Activated CD4-positive, alpha-beta T cell treated with anti-CD3 and anti-CD28 coated beads for 36 hours (primary cell): ENCODE measurements at regions of chr9 and their contacts with region 1.

Region 1: GRCh38 chr9:129884220-129885017 is 49.2 kb downstream of the USP20 start:
- DNase-seq: peak; percentile 98
- ATAC-seq: peak; percentile 55
- H3K4me3 Mint-ChIP-seq: peak overlapping the region; percentile 97
- H3K27ac Mint-ChIP-seq: peak overlapping the region; percentile 99
- H3K4me1 Mint-ChIP-seq: peaks cover 41% of the 10 kb centered on the region
- H3K27me3 Mint-ChIP-seq: no peaks in the 10 kb centered on the region

Region 2: GRCh38 chr9:129487642-129488409 is 396.6 kb before region 1 on chr9:
- CTCF ChIA-PET with region 1: no interaction called
- POLR2A ChIA-PET with region 1: no interaction called
- intact Hi-C with region 1: loop called in 1 of 2 experiments (anchors 2 kb)
- DNase-seq: peak; percentile 76
- ATAC-seq: peak; percentile 34
- H3K4me3 Mint-ChIP-seq: peak overlapping the region; percentile 93
- H3K27ac Mint-ChIP-seq: peak overlapping the region; percentile 96
- H3K4me1 Mint-ChIP-seq: peaks cover 66% of the 10 kb centered on the region
- H3K27me3 Mint-ChIP-seq: no peaks in the 10 kb centered on the region

Region 3: GRCh38 chr9:129550199-129550839 is 334.1 kb before region 1 on chr9:
- CTCF ChIA-PET with region 1: no interaction called
- POLR2A ChIA-PET with region 1: no interaction called
- intact Hi-C with region 1: no loop called
- DNase-seq: peak; percentile 50
- ATAC-seq: peak; percentile 82
- H3K4me3 Mint-ChIP-seq: peak overlapping the region; percentile 64
- H3K27ac Mint-ChIP-seq: peak overlapping the region; percentile 42
- H3K4me1 Mint-ChIP-seq: peaks cover 3% of the 10 kb centered on the region
- H3K27me3 Mint-ChIP-seq: peaks cover 21% of the 10 kb centered on the region

Region 4: GRCh38 chr9:129597355-129598088 is 286.9 kb before region 1 on chr9:
- CTCF ChIA-PET with region 1: no interaction called
- POLR2A ChIA-PET with region 1: no interaction called
- intact Hi-C with region 1: no loop called
- DNase-seq: peak; percentile 58
- ATAC-seq: peak; percentile 69
- H3K4me3 Mint-ChIP-seq: peak overlapping the region; percentile 33
- H3K27ac Mint-ChIP-seq: no peak overlapping the region
- H3K4me1 Mint-ChIP-seq: peaks cover 18% of the 10 kb centered on the region
- H3K27me3 Mint-ChIP-seq: peaks cover 4% of the 10 kb centered on the region

Region 5: GRCh38 chr9:129863059-129863690 is 21.2 kb before region 1 on chr9:
- CTCF ChIA-PET with region 1: interaction called, 12 read pairs
- POLR2A ChIA-PET with region 1: interaction called, 5 read pairs
- intact Hi-C with region 1: loop called in 1 of 2 experiments (anchors 2 kb)
- DNase-seq: peak; percentile 83
- ATAC-seq: peak; percentile 70
- H3K4me3 Mint-ChIP-seq: peak overlapping the region; percentile 32
- H3K27ac Mint-ChIP-seq: peak overlapping the region; percentile 87
- H3K4me1 Mint-ChIP-seq: peaks cover 75% of the 10 kb centered on the region
- H3K27me3 Mint-ChIP-seq: no peaks in the 10 kb centered on the region

Region 6: GRCh38 chr9:129944506-129945116 is 60.2 kb after region 1 on chr9:
- CTCF ChIA-PET with region 1: interaction called, 3 read pairs
- POLR2A ChIA-PET with region 1: no interaction called
- intact Hi-C with region 1: loop called in 1 of 2 experiments (anchors 1 kb)
- DNase-seq: peak; percentile 77
- ATAC-seq: peak; percentile 94
- H3K4me3 Mint-ChIP-seq: peak overlapping the region; percentile 5
- H3K27ac Mint-ChIP-seq: peak overlapping the region; percentile 86
- H3K4me1 Mint-ChIP-seq: peaks cover 64% of the 10 kb centered on the region
- H3K27me3 Mint-ChIP-seq: no peaks in the 10 kb centered on the region

Region 7: DNA sequence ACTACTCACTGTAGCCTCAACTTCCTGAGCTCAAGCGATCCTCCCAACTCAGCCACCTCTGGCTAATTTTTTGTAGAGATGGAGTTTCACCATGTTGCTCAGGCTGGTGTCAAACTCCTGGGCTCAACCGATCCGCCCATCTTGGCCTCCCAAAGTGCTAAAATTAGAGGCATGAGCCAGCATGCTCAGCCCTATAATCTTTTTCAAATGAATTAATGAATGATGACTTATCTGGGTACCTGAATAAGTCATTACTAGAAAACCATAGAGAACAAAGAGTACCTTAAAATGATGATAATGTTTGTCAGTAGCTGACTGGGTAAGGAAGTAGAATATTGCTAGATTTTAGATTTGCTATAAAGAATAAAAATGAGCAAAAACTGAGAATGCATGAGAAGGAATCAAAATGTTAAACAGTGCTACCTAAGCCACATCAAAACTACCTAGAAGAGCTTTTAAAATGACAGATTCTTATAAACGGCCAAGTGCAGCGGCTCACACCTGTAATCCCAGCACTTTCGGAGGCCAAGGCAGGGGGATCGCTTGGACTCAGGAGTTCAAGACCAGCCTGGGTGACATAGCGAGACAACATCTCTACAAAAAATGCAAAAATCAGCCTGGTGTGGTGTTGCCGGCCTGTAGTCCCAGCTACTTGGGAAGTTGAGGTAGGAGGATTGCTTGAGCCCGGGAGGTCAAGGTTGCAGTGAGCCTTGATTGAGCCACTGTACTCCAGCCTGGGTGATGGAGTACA is 145.0 kb after region 1 on chr9:
- CTCF ChIA-PET with region 1: interaction called, 5 read pairs
- POLR2A ChIA-PET with region 1: interaction called, 13 read pairs
- intact Hi-C with region 1: no loop called
- DNase-seq: peak; percentile 70
- ATAC-seq: peak; percentile 45
- H3K4me3 Mint-ChIP-seq: peak overlapping the region; percentile 44
- H3K27ac Mint-ChIP-seq: peak overlapping the region; percentile 92
- H3K4me1 Mint-ChIP-seq: peaks cover 98% of the 10 kb centered on the region
- H3K27me3 Mint-ChIP-seq: no peaks in the 10 kb centered on the region

Region 8: GRCh38 chr9:130128733-130129431 is 244.5 kb after region 1 on chr9:
- CTCF ChIA-PET with region 1: no interaction called
- POLR2A ChIA-PET with region 1: no interaction called
- intact Hi-C with region 1: loop called in 1 of 2 experiments (anchors 1 kb)
- DNase-seq: peak; percentile 70
- ATAC-seq: peak; percentile 82
- H3K4me3 Mint-ChIP-seq: peak overlapping the region; percentile 75
- H3K27ac Mint-ChIP-seq: peak overlapping the region; percentile 100
- H3K4me1 Mint-ChIP-seq: peaks cover 54% of the 10 kb centered on the region
- H3K27me3 Mint-ChIP-seq: no peaks in the 10 kb centered on the region

Region 9: DNA sequence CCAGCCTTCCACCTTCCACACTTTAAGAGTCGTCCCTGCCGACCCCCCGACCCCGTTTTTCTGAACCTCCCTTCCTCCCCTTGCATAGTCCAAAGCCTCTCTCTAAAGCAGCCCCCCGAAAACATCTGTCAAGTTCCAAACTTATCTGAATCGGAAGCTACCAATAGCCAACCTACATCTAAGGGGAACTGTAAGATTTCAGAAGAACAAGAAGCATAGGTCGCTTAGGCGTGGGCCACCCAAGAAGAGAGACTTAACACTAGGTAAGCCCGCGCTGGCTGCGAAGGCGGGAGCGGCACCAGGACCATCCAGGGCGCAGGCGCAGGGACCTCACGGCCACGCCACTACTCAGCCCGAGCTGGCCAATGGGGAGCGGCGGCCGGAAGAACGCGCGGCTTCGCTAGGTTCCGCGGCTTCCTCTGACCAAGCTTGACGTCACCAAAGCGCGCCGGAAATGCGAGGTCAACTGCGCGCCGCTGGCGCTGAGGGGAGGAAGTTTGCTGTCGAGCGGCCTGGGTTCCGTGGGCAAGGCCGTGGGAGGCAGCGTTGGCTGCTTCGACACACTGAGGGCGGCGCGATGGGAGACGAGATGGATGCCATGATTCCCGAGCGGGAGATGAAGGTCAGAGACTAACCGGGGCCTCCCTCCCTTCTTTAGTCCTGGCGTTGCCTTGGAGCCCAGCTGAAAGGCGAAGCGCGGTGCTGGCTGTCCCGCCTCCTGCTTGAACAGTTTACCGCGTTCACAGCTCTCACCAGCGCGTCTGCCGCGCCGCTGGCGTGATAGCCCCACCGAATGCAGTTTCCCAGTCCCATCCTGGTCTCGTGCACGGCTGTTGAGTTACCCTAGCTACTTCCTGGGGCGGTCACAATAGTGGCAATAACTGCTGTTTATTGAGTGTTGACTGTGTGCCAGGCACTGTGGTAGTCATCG is 1241.0 kb after region 1 on chr9 and contains the start of gene NUP214:
- CTCF ChIA-PET with region 1: no interaction called
- POLR2A ChIA-PET with region 1: no interaction called
- intact Hi-C with region 1: loop called in 1 of 2 experiments (anchors 5 kb)
- DNase-seq: peak; percentile 100
- ATAC-seq: peak; percentile 100
- H3K4me3 Mint-ChIP-seq: peak within 1 kb of the TSS; percentile 94
- H3K27ac Mint-ChIP-seq: peak within 1 kb of the TSS; percentile 92
- H3K4me1 Mint-ChIP-seq: peaks cover 31% of the 10 kb centered on the region
- H3K27me3 Mint-ChIP-seq: no peaks in the 10 kb centered on the region
- total RNA-seq, gene NUP214: 61.4 to 97.7 TPM